Motor neuron (in vitro differentiated cells): ENCODE measurements at regions of chr7 and their contacts with region 1.

Region 1: GRCh38 chr7:29866490-29866930 is 60.2 kb downstream of the WIPF3 start:
- ATAC-seq: peak in 1 of 8 experiments; percentile 10
- H3K4me3 ChIP-seq: no peak overlapping the region
- H3K27ac ChIP-seq: no peak overlapping the region
- H3K4me1 ChIP-seq: peaks cover 6 to 14% of the 10 kb centered on the region in 2 donors

Region 2: GRCh38 chr7:29639881-29640595 is 226.5 kb before region 1 on chr7:
- in situ Hi-C with region 1: loop called in 1 of 9 experiments (anchors 25 kb)
- ATAC-seq: peak in 4 of 8 experiments; percentile 30 to 71 (median 56)
- H3K4me3 ChIP-seq: no peak overlapping the region
- H3K27ac ChIP-seq: no peak overlapping the region
- H3K4me1 ChIP-seq: peaks cover 3 to 11% of the 10 kb centered on the region in 2 donors